Kidney (tissue), 22 donors: ENCODE measurements at regions of chr16 and their contacts with region 1.

Region 1: GRCh38 chr16:70534971-70535370 is 11.4 kb downstream of the SF3B3 start:
- DNase-seq: no peak
- H3K4me3 ChIP-seq: no peak overlapping the region
- H3K27ac ChIP-seq: no peak overlapping the region
- H3K4me1 ChIP-seq: no peaks in the 10 kb centered on the region
- H3K27me3 ChIP-seq: no peaks in the 10 kb centered on the region
- CTCF ChIP-seq: no peak

Region 2: GRCh38 chr16:70653809-70654771 is 119.1 kb after region 1 on chr16:
- intact Hi-C with region 1: loop called (anchors 10 kb)
- DNase-seq: peak; percentile 79 to 94 (median 90)
- H3K4me3 ChIP-seq: peak overlapping the region; percentile 36 to 52 (median 50)
- H3K27ac ChIP-seq: no peak overlapping the region
- H3K4me1 ChIP-seq: peaks cover 0 to 6% (median 0%) of the 10 kb centered on the region in 3 donors
- H3K27me3 ChIP-seq: no peaks in the 10 kb centered on the region
- CTCF ChIP-seq: peak; percentile 99